ENCODE measurements at regions of chr15 and their contacts with region 1.

Region 1: DNA sequence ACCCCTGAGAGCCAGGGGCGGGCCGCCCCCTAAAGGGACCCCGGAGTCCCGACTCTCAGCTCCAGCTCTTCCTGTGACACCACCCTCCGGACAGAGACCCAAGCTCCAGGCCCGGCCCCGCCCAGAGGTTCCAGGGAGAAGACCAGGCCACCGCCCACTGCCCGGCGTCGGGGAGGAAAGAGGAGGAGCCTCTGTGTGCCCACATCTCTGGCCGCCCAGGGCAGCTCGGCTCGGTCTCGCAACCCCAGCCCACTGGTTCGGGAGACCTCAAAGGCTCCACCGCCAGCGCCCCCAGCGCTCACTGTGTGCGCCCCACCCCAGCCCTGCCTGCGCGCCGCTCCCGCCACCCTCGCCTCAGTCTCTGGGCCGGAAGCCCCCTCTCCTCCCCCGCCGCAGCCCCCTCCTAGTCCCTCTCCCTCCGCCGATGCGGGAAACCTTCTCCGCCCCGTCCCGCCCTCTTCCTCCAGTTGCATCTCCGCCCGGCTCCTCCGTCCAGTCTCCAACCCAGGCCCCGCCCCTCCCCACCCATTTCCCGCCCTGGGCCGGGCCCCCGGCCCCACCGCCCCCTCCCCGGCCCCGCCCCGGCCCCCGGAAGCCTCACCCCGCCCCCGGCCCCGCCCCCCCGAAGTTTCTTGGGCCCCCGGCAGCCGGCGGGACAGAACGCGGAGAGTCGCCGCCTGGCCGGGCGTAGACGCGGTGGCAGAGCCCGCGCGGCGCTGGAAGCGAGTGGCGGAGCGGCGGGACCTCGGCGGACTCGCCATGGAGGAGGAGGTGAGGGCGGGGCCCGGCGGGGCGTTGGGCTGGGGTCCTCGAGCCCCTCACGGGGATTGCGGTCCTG is at the start of gene PLEKHO2:
- DNase-seq: peak; percentile 99
- ATAC-seq: peak; percentile 90
- total RNA-seq, gene PLEKHO2: 10.4 TPM

Region 2: GRCh38 chr15:64878705-64879104 is 37.2 kb after region 1 on chr15:
- intact Hi-C with region 1: loop called (anchors 2 kb)
- DNase-seq: no peak
- ATAC-seq: no peak

Region 3: GRCh38 chr15:64905119-64905831 is 63.8 kb after region 1 on chr15:
- intact Hi-C with region 1: loop called (anchors 2 kb)
- DNase-seq: peak; percentile 91
- ATAC-seq: peak; percentile 92

Region 4: GRCh38 chr15:65110676-65111292 is 269.3 kb after region 1 on chr15:
- intact Hi-C with region 1: no loop called
- DNase-seq: no peak
- ATAC-seq: peak; percentile 64

Measured in Right ventricle myocardium inferior (tissue), 1 donor.